ENCODE measurements at regions of chr7 and their contacts with region 1.

Region 1: DNA sequence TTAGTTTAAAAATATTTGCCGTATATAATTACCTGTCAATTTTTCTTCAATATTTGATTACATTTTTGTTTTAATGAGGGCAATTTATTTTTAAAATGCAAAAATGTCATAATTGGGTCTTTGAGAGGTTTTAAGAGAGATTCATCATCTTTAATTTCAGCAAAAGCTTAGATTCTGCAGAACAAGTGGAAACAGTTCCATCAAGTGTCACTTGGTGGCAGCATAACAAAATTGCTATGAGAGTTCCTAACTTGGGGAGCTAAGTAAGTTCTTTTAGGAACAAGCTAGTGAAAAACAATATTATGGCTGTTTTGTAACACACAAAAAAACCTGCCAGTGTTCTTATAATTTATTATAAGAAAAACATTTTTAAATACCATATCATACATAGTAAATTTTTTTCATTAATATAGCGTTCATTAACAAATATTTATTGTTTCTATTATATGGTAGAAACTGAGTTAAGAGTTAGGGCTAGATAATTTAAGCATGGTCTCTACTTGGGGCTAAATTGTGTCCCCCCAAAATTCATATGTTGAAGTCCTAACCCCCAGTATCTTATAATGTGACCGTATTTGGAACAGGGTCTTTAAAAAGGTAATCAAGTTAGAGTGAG is 155.2 kb downstream of the MAGI2 start:
- DNase-seq: no peak
- H3K4me3 ChIP-seq: no peak overlapping the region
- CTCF ChIP-seq: peak; percentile 59

Region 2: GRCh38 chr7:79287981-79288380 is 10.3 kb before region 1 on chr7:
- CTCF ChIA-PET with region 1: interaction called, 31 read pairs
- POLR2A ChIA-PET with region 1: no interaction called
- DNase-seq: no peak
- H3K4me3 ChIP-seq: no peak overlapping the region
- CTCF ChIP-seq: no peak

Region 3: GRCh38 chr7:79741684-79742083 is 443.4 kb after region 1 on chr7:
- CTCF ChIA-PET with region 1: interaction called, 12 read pairs
- POLR2A ChIA-PET with region 1: no interaction called
- DNase-seq: no peak
- H3K4me3 ChIP-seq: no peak overlapping the region
- CTCF ChIP-seq: no peak